Naive thymus-derived CD4-positive, alpha-beta T cell (primary cell): ENCODE measurements at regions of chr10 and their contacts with region 1.

Region 1: GRCh38 chr10:89643431-89644331 is 1.4 kb downstream of the PANK1 start:
- DNase-seq: peak; percentile 22 to 78 (median 68)
- ATAC-seq: peak; percentile 94
- H3K4me3 ChIP-seq: peak overlapping the region; percentile 76
- H3K4me3 Mint-ChIP-seq: no peak overlapping the region
- H3K27ac ChIP-seq: peak overlapping the region; percentile 55
- H3K27ac Mint-ChIP-seq: peak overlapping the region in 2 of 9 donors; percentile 4 to 72
- H3K4me1 ChIP-seq: peaks cover 0 to 6% of the 10 kb centered on the region in 2 donors
- H3K4me1 Mint-ChIP-seq: peaks cover 6 to 13% (median 8%) of the 10 kb centered on the region in 7 donors
- H3K27me3 ChIP-seq: no peaks in the 10 kb centered on the region
- H3K27me3 Mint-ChIP-seq: peaks cover 0 to 23% (median 6%) of the 10 kb centered on the region in 5 donors

Region 2: DNA sequence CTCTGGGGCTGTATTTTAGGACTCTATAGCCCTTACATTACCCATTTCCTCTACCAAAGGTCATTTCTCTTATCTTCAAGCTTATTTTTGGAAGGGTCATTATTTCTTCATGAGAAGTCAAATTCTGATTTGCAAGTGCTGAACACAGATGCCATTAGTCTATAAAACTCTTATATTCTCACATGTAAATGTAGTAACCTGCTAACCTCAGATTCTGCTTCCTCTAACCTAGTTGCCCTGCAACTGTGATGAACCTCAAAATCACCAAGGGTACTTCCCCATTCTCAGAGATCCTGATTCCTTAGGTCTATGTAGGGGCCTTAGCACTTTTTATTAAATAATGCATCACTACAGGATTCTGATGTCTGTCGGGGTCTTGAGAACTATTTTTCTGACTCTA is 646.8 kb before region 1 on chr10:
- CTCF ChIA-PET with region 1: no interaction called
- POLR2A ChIA-PET with region 1: no interaction called
- intact Hi-C with region 1: loop called (anchors 10 kb)
- DNase-seq: no peak
- ATAC-seq: peak; percentile 78
- H3K4me3 ChIP-seq: no peak overlapping the region
- H3K4me3 Mint-ChIP-seq: peak overlapping the region in 1 of 10 donors; percentile 12
- H3K27ac ChIP-seq: no peak overlapping the region
- H3K27ac Mint-ChIP-seq: peak overlapping the region in 1 of 9 donors; percentile 14
- H3K4me1 ChIP-seq: peaks cover 33 to 59% of the 10 kb centered on the region in 2 donors
- H3K4me1 Mint-ChIP-seq: peaks cover 33 to 74% (median 52%) of the 10 kb centered on the region in 7 donors
- H3K27me3 ChIP-seq: no peaks in the 10 kb centered on the region
- H3K27me3 Mint-ChIP-seq: no peaks in the 10 kb centered on the region